Ascending aorta (tissue), 2 donors: ENCODE measurements at regions of chr3 and their contacts with region 1.

Region 1: DNA sequence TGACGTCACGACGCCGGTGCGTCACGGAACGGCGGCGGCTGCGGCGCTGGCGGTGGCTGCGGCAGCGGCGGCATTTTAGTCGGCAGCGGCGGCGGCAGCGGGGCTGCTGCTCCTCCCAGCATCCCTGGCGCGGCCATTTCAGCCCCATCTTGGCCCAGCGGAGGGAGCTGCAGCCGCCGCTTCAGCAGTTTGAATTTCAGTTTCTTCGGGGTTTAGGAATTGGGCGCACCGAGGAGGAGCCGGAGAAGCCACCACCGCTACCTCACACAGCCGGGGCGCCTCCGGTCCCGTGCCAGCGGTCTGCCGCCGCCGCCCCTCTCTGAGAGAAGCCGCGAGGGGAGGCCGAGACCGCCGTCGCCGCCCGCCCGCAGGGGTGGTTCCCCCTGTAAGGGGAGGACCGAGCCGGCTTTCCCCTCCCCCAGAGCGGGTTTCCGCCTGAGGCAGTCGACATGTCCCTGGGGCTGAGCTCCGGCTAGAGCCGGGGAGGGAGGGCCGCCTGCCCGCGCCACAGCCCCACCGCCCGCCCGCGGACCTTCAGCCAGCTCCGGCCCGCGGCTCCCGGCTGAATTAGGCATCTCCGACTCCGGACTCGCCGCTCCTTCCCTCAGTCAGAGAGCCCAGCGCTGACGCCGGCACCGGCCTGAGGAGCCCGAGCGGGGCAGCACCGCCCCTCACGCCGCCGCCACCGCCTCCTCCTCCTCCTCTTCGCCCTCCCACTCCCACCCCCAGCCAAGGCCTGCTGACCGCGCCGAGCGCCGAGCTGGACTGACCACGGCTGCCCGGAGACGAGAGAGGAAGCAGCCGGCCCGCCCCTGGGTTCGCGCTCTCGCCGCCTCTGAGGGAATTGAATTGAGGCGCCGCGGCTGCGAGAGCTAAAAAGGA is at the start of gene TSC22D2:
- DNase-seq: peak; percentile 78 to 97
- H3K4me3 ChIP-seq: peak within 1 kb of the TSS; percentile 59 to 81
- H3K27ac ChIP-seq: peak within 1 kb of the TSS; percentile 97 to 99
- H3K4me1 ChIP-seq: peaks cover 0 to 3% of the 10 kb centered on the region in 2 donors
- H3K27me3 ChIP-seq: no peaks in the 10 kb centered on the region
- CTCF ChIP-seq: peak; percentile 12 to 40 (median 18)
- total RNA-seq, gene TSC22D2: 17.9 TPM

Region 2: DNA sequence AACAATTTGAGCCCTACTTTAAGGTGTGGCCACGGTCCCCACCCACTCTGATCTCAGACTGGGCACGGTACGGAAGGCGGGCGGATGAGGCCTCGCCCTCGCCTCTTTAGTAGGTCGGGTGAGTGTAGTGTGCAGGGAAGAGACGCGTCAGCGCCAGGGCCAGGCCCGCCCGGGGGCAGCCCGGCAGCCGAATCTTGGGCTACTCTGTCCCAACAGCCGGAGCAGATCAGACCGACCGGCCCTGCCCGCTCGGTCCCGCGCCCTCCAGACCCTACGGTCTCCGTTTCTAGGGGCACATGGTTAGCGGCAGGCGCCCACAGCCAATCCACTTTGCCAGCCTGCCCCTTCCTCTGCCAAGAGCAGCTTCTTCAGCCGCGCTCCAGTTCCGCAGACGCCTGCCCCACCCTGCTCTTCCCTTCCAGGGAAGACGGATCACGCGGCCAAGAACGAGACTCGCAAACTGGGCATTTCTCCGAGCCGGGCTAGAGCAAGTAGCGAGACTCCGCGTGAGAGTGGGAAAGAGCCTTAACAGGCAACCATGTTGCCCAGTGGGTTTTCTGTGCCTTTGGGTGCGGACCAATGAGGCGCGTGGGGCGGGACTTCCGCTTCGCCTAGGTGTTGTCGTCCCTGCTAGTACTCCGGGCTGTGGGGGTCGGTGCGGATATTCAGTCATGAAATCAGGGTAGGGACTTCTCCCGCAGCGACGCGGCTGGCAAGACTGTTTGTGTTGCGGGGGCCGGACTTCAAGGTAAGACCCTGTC is 595.7 kb before region 1 on chr3 and contains the start of gene RNF13:
- intact Hi-C with region 1: loop called (anchors 10 kb)
- DNase-seq: peak; percentile 95 to 99
- H3K4me3 ChIP-seq: peak within 1 kb of the TSS; percentile 79 to 85
- H3K27ac ChIP-seq: peak within 1 kb of the TSS; percentile 99
- H3K4me1 ChIP-seq: peaks cover 0 to 29% of the 10 kb centered on the region in 2 donors
- H3K27me3 ChIP-seq: no peaks in the 10 kb centered on the region
- CTCF ChIP-seq: no peak
- total RNA-seq, gene RNF13: 69.3 TPM

Region 3: GRCh38 chr3:150227839-150228238 is 180.6 kb before region 1 on chr3:
- intact Hi-C with region 1: loop called (anchors 2 kb)
- DNase-seq: no peak
- H3K4me3 ChIP-seq: no peak overlapping the region
- H3K27ac ChIP-seq: no peak overlapping the region
- H3K4me1 ChIP-seq: no peaks in the 10 kb centered on the region
- H3K27me3 ChIP-seq: no peaks in the 10 kb centered on the region
- CTCF ChIP-seq: peak; percentile 42 to 66 (median 54)

Region 4: GRCh38 chr3:150348500-150348899 is 60.0 kb before region 1 on chr3:
- intact Hi-C with region 1: loop called (anchors 2 kb)
- DNase-seq: peak in 1 of 2 donors; percentile 84
- H3K4me3 ChIP-seq: no peak overlapping the region
- H3K27ac ChIP-seq: peak overlapping the region; percentile 54 to 55
- H3K4me1 ChIP-seq: peaks cover 0 to 22% of the 10 kb centered on the region in 2 donors
- H3K27me3 ChIP-seq: no peaks in the 10 kb centered on the region
- CTCF ChIP-seq: no peak

Region 5: GRCh38 chr3:150449169-150449721 is 40.8 kb after region 1 on chr3:
- intact Hi-C with region 1: loop called (anchors 5 kb)
- DNase-seq: no peak
- H3K4me3 ChIP-seq: no peak overlapping the region
- H3K27ac ChIP-seq: no peak overlapping the region
- H3K4me1 ChIP-seq: peaks cover 0 to 23% of the 10 kb centered on the region in 2 donors
- H3K27me3 ChIP-seq: no peaks in the 10 kb centered on the region
- CTCF ChIP-seq: no peak

Region 6: GRCh38 chr3:150546226-150547044 is 138.0 kb after region 1 on chr3 and contains the starts of genes EIF2A and SERP1:
- intact Hi-C with region 1: loop called (anchors 1 kb)
- DNase-seq: peak; percentile 94 to 99
- H3K4me3 ChIP-seq: peak within 1 kb of the TSS; percentile 89 to 99
- H3K27ac ChIP-seq: peak within 1 kb of the TSS; percentile 99 to 100
- H3K4me1 ChIP-seq: peaks cover 0 to 24% of the 10 kb centered on the region in 2 donors
- H3K27me3 ChIP-seq: no peaks in the 10 kb centered on the region
- CTCF ChIP-seq: no peak
- total RNA-seq, gene EIF2A: 83.2 TPM
- total RNA-seq, gene SERP1: 237 TPM

Region 7: DNA sequence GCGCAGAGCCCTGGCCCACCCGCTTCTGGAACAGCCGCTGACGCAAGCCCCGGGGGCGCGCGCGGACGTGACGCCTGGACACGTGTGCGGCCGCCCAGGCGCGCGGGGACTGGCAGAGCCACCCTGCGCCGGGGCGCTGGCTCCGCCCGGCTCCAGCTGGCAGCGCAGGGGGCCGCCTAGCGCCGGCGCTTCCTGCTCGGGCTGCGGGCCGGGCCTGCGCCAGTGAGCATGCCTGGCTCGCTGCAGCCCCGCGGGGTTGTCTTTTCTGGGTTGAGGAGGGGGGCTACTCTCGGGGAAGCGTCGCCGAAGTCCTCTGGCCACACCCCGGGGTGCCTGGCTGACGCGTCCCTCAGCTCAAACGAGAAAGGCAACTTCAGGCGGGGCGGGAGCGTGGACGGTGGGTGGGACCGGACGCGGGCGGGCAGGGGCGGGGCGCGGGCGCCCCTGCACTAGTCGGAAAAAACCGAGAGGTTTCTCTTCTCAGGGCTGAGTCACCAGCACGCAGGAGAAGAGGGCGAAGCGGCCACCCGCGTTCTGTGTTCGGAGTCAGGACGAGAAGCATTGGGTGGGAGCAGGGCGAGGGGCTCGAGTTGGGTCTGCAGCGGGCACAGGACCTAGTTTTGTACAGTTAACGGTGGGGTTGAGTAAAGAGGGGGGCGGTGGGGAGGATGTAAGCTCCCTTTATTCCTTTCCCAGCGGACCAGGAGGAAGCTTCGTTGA is 354.8 kb after region 1 on chr3 and contains the start of gene SIAH2:
- intact Hi-C with region 1: loop called (anchors 5 kb)
- DNase-seq: peak; percentile 82 to 96
- H3K4me3 ChIP-seq: peak within 1 kb of the TSS; percentile 81 to 94
- H3K27ac ChIP-seq: peak within 1 kb of the TSS; percentile 92 to 97
- H3K4me1 ChIP-seq: peaks cover 0 to 23% of the 10 kb centered on the region in 2 donors
- H3K27me3 ChIP-seq: no peaks in the 10 kb centered on the region
- CTCF ChIP-seq: no peak
- total RNA-seq, gene SIAH2: 50.9 TPM